ENCODE measurements at regions of chr5 and their contacts with region 1.

Region 1: GRCh38 chr5:64207978-64208377 is 42.3 kb downstream of the RNF180 start:
- DNase-seq: no peak
- H3K27ac ChIP-seq: no peak overlapping the region
- CTCF ChIP-seq: peak; percentile 35; the same call in 1 of the 2 replicates

Region 2: DNA sequence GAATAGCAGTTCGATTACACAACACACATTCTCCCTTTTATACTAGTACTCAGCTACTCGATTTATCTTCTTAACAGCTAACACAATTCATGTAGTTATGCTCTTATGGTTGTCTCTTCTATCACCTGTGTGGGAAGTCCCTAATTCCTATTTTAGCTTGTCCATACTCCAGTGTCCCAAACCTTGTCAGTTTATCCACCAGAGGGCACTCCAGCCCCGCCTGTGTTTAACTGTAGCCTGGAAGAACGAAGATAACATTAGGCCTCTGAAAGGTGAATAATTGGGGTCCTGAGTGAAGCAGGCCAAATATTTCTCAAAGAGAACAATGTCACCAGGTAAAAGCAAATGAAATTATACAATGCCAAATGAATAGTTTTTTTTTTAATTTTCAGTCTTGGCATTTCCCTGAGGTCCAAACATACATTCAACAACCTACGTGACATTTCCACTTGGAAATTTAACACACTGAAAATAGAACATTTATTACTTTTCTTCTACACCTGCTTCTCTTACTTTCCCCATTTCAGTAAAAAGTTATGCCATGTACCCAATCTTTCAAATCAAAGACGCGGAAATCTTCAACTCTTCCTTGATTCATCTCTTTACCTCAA is 806.4 kb before region 1 on chr5:
- CTCF ChIA-PET with region 1: interaction called, 11 read pairs
- POLR2A ChIA-PET with region 1: no interaction called
- DNase-seq: peak; percentile 53
- H3K27ac ChIP-seq: no peak overlapping the region
- CTCF ChIP-seq: peak; percentile 94

Region 3: DNA sequence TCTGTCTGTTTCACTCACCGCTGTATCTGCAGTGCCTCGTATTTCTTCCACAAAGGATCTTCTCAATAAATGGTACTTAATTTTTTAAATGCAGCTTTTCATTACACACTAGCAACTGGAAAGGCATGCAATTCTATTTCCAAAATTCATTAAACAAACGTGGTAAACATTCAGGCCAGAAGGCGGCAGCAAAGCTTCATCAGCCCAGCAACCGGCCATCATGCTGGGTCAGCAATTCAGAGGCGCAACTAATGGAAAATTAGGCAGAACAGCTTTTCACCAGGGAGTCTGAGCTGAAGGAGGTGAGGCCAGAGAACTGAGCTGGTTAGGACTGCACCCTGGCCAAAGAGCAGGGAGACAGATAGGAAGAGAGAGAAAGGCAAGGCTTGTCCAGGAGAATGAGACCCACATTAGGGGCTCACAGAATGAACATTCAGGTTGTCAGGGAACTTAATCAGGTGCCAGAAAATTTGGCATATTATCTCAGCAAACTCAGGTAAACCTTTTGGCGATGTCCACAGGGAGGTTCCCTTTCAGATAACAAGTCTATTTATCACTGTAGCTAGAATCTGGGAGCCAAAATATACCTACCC is 60.0 kb before region 1 on chr5:
- CTCF ChIA-PET with region 1: interaction called, 18 read pairs
- POLR2A ChIA-PET with region 1: no interaction called
- DNase-seq: peak; percentile 62
- H3K27ac ChIP-seq: no peak overlapping the region
- CTCF ChIP-seq: peak; percentile 88

Region 4: DNA sequence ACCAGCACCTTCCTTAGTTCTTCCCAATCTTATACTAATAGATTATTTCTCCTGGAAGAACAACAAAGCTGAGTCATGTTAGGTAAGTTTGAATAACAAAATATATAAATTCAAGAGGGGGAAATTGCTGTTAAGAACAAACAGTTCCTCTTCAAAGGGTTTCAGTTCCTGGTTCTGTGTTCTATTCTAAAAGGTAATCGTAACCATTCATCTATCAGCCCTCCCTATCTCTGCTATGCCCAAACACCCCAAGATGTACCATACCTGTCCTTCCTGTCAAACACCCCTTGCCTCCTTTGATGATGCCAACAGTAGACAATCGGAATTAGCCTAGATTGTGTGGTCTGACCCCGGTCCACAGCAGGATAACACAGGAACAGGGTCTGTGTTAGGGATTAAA is 46.6 kb before region 1 on chr5:
- CTCF ChIA-PET with region 1: no interaction called
- POLR2A ChIA-PET with region 1: no interaction called
- DNase-seq: no peak
- H3K27ac ChIP-seq: no peak overlapping the region
- CTCF ChIP-seq: no peak